Caco-2 (cell line): ENCODE measurements at regions of chr9 and their contacts with region 1.

Region 1: DNA sequence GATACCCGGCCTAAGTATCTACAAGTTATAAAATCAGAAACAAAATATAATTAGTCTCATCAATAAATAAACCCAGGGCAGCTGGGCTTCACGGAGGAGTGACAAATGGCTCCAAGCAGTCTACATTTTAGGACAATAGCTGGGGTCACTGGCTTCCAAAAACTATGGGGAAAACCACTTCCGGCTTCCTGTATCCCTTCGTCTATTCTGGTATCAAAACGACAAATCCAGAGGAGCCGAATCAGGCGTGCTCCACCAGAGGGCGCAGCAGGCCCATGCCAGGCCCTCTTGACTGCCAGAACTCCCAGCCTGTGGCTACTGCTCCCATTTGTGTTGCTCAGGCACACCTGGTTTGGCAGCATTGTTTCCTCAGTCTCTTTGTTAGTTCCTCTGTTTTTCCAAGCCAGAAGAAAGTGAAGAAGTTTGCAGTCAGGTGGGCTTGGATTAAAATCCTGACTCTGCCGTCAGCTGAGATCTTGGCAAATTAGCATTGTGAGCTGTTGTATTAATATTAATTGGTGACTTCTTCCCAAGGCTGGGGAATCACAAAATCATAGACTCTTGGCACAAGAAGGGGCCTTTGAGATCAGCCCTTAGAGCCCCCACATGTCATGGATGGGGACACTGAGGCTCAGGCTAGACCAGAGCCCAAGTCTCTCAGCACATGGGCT is 11.6 kb upstream of the RAB14 start:
- DNase-seq: peak; percentile 87 to 90
- H3K4me3 ChIP-seq: no peak overlapping the region
- H3K4me3 Mint-ChIP-seq: no peak overlapping the region
- H3K27ac Mint-ChIP-seq: no peak overlapping the region
- H3K4me1 ChIP-seq: no peaks in the 10 kb centered on the region
- H3K4me1 Mint-ChIP-seq: no peaks in the 10 kb centered on the region
- H3K27me3 ChIP-seq: no peaks in the 10 kb centered on the region
- H3K27me3 Mint-ChIP-seq: no peaks in the 10 kb centered on the region
- CTCF ChIP-seq: peak; percentile 88 to 95

Region 2: DNA sequence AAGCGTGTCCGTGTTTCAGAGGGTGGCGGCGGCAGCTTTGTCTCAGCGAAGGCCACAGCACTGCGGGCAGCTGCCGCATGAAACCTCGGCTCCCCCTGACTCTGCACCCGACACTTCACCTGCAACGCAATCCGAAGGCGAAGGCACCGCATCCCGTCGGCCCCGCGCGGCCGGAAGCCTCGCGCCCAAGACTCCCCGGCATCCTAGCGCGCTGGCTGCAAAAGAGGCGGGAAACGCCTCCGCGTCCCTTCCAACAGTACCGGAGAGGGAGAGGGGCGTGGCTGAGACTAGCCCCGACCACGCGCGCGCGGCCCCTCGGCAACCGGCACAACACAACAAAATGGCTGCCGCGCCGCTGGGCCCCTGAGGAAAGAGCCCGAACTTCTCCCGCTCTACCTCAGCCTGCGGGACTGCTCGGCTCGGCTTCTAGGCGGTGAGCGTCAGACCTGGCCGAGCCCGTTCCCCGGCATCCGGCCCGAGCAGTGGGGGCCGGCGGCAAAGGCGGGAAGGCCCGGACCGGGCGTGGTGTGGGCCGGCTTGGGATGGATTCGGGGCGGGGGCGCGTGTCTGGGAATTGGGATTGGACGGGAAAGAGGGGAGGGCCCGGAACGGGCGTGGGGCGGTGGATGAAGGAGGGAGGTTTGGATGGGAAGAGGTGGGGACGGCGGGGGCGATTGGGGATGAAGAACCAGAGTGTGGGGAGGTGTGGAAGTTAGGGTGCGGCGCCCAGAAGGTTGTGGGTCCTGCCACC is 138.5 kb before region 1 on chr9 and contains the start of gene CNTRL:
- CTCF ChIA-PET with region 1: no interaction called
- POLR2A ChIA-PET with region 1: no interaction called
- intact Hi-C with region 1: no loop called
- DNase-seq: peak; percentile 91 to 92
- H3K4me3 ChIP-seq: peak within 1 kb of the TSS; percentile 59
- H3K4me3 Mint-ChIP-seq: peak within 1 kb of the TSS; percentile 79
- H3K27ac Mint-ChIP-seq: peak within 1 kb of the TSS; percentile 74
- H3K4me1 ChIP-seq: no peaks in the 10 kb centered on the region
- H3K4me1 Mint-ChIP-seq: peaks cover 14% of the 10 kb centered on the region
- H3K27me3 ChIP-seq: no peaks in the 10 kb centered on the region
- H3K27me3 Mint-ChIP-seq: peaks cover 5% of the 10 kb centered on the region
- CTCF ChIP-seq: no peak
- total RNA-seq, gene CNTRL: 12.0 and 14.9 TPM in 2 replicates

Region 3: GRCh38 chr9:121160025-121160424 is 53.2 kb before region 1 on chr9:
- CTCF ChIA-PET with region 1: no interaction called
- POLR2A ChIA-PET with region 1: no interaction called
- intact Hi-C with region 1: no loop called
- DNase-seq: no peak
- H3K4me3 ChIP-seq: no peak overlapping the region
- H3K4me3 Mint-ChIP-seq: no peak overlapping the region
- H3K27ac Mint-ChIP-seq: no peak overlapping the region
- H3K4me1 ChIP-seq: peaks cover 2% of the 10 kb centered on the region
- H3K4me1 Mint-ChIP-seq: no peaks in the 10 kb centered on the region
- H3K27me3 ChIP-seq: no peaks in the 10 kb centered on the region
- H3K27me3 Mint-ChIP-seq: no peaks in the 10 kb centered on the region
- CTCF ChIP-seq: no peak

Region 4: DNA sequence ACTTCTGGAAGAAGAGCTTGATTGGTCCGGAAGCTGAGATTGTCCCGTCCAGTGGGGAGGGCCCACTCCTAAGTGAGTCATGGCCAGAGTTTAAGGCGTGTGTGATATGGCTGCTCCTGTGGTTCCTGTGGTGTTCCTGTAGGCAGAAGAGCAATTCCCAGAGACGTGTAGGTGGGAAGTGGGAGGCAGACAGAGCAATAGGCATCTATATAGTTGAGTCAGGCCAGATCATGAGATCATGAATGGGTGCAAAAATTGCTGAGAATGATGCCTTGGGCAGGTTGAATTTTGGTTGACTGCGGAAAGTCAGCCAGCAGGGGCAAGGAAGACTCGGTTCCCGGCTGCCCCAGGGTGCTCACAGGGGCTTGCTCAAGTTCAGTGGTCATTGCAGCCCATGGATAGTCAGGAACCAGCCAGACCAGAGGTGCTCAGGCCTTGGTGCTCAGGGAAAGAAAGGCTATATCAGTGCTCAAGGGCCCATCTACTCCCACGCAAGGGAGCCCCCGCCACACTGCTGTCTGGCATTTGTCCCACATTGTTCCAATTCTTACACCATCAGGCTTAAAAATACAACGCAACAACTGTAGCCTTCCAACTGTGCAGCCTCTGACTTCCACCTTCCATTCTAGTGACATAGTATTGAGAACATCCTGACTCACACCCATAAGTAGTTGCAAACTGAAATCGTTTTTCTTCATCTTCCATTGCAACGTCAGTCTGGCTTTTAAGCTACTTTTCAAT is 33.7 kb after region 1 on chr9:
- CTCF ChIA-PET with region 1: no interaction called
- POLR2A ChIA-PET with region 1: no interaction called
- intact Hi-C with region 1: no loop called
- DNase-seq: no peak
- H3K4me3 ChIP-seq: no peak overlapping the region
- H3K4me3 Mint-ChIP-seq: no peak overlapping the region
- H3K27ac Mint-ChIP-seq: no peak overlapping the region
- H3K4me1 ChIP-seq: no peaks in the 10 kb centered on the region
- H3K4me1 Mint-ChIP-seq: no peaks in the 10 kb centered on the region
- H3K27me3 ChIP-seq: no peaks in the 10 kb centered on the region
- H3K27me3 Mint-ChIP-seq: no peaks in the 10 kb centered on the region
- CTCF ChIP-seq: no peak

Region 5: GRCh38 chr9:121278535-121279261 is 65.4 kb after region 1 on chr9:
- CTCF ChIA-PET with region 1: interaction called, 8 read pairs
- POLR2A ChIA-PET with region 1: no interaction called
- intact Hi-C with region 1: loop called (anchors 1 kb)
- DNase-seq: peak; percentile 70 to 72
- H3K4me3 ChIP-seq: no peak overlapping the region
- H3K4me3 Mint-ChIP-seq: peak overlapping the region; percentile 50
- H3K27ac Mint-ChIP-seq: peak overlapping the region; percentile 79
- H3K4me1 ChIP-seq: peaks cover 34% of the 10 kb centered on the region
- H3K4me1 Mint-ChIP-seq: peaks cover 37% of the 10 kb centered on the region
- H3K27me3 ChIP-seq: no peaks in the 10 kb centered on the region
- H3K27me3 Mint-ChIP-seq: no peaks in the 10 kb centered on the region
- CTCF ChIP-seq: peak; percentile 84 to 88

Region 6: DNA sequence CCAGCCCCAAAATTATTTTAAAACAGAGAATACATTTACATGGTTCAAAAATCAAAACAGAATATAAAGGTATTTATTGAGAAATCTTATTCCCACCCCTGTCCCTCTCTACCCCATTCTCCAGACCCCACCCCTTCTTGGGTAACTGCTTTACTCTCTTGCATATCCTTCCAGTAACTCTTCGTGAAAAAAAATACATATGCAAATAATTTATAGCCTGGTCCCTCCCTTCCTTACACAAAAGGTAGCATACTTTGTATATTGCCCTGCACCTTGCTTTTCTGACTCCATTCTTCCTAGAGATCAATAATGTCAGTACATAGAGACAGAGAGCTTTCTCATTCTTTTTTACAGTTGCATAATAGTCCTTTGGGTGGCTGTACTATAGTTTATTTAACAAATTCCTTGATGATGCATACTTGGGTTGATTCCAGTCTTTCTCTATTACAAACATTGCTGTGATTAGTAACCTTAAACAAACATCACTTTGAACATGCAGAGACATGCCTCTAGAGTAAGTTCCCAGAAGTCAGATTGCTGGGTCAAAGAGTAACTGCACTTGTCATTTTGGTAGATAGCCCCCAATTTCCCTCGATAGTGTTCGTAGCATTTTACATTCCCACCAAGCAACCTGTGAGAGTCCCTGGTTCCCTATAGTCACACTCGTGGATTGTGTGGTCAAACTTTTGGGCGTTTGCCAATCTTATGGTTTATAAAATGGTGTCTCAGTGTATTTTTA is 108.9 kb after region 1 on chr9:
- CTCF ChIA-PET with region 1: interaction called, 3 read pairs
- POLR2A ChIA-PET with region 1: no interaction called
- intact Hi-C with region 1: loop called (anchors 1 kb)
- DNase-seq: peak in 1 of 2 experiments; percentile 52
- H3K4me3 ChIP-seq: no peak overlapping the region
- H3K4me3 Mint-ChIP-seq: no peak overlapping the region
- H3K27ac Mint-ChIP-seq: peak overlapping the region; percentile 43
- H3K4me1 ChIP-seq: peaks cover 20% of the 10 kb centered on the region; the same call in 1 of the 2 replicates
- H3K4me1 Mint-ChIP-seq: peaks cover 11% of the 10 kb centered on the region
- H3K27me3 ChIP-seq: no peaks in the 10 kb centered on the region
- H3K27me3 Mint-ChIP-seq: no peaks in the 10 kb centered on the region
- CTCF ChIP-seq: no peak

Region 7: GRCh38 chr9:121399883-121400607 is 186.8 kb after region 1 on chr9:
- CTCF ChIA-PET with region 1: interaction called, 4 read pairs
- POLR2A ChIA-PET with region 1: no interaction called
- intact Hi-C with region 1: loop called (anchors 1 kb)
- DNase-seq: peak in 1 of 2 experiments; percentile 54
- H3K4me3 ChIP-seq: no peak overlapping the region
- H3K4me3 Mint-ChIP-seq: no peak overlapping the region
- H3K27ac Mint-ChIP-seq: no peak overlapping the region
- H3K4me1 ChIP-seq: no peaks in the 10 kb centered on the region
- H3K4me1 Mint-ChIP-seq: no peaks in the 10 kb centered on the region
- H3K27me3 ChIP-seq: no peaks in the 10 kb centered on the region
- H3K27me3 Mint-ChIP-seq: no peaks in the 10 kb centered on the region
- CTCF ChIP-seq: peak; percentile 29 to 36

Region 8: GRCh38 chr9:121538246-121538645 is 325.0 kb after region 1 on chr9:
- CTCF ChIA-PET with region 1: no interaction called
- POLR2A ChIA-PET with region 1: no interaction called
- intact Hi-C with region 1: no loop called
- DNase-seq: peak in 1 of 2 experiments; percentile 15
- H3K4me3 ChIP-seq: no peak overlapping the region
- H3K4me3 Mint-ChIP-seq: no peak overlapping the region
- H3K27ac Mint-ChIP-seq: no peak overlapping the region
- H3K4me1 ChIP-seq: no peaks in the 10 kb centered on the region
- H3K4me1 Mint-ChIP-seq: peaks cover 1% of the 10 kb centered on the region
- H3K27me3 ChIP-seq: no peaks in the 10 kb centered on the region
- H3K27me3 Mint-ChIP-seq: no peaks in the 10 kb centered on the region
- CTCF ChIP-seq: no peak